H1 (cell line): ENCODE measurements at regions of chr17 and their contacts with region 1.

Region 1: DNA sequence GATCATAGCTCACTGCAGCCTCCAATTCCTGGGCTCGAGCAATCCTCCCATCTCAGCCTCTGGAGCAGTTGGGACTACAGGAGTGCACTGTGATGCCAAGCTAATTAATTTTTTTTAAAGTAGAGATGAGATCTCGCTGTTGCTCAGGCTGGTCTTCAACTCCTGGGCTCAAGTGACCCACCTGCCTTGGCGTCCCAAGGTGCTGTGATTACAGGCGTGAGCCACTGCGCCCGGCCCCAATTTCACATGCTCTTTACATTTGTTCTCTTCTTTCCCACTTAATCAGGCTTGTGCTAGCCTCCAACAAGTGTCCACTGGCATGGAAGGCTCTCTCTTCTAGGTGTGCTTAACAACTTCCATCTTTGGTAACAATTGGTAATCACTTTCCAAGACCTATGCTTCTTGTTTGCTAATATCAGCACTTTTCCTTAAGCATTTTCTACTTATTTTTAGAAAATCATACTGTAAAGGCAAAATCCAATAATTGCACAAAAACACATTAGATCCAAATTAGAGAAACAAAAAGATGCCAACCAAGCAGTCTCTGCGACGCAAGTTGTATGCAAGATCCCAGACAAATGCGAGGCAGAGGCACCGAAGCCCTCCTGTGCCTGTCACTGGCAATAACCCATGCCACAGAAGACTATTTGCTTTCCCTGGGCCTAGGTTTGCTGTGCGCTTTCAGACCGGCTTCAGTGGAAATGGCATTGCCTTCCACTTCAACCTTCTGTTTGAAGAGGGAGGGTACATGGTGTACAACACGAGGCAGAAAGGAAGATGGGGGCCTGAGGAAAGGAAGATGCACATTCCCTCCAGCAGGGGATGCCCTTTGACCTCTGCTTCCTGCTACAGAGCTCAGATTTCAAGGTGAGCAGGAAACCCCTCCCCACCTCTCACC is 52.6 kb downstream of the NOS2 start:
- DNase-seq: peak; percentile 43 to 81
- H3K4me3 ChIP-seq: no peak overlapping the region
- H3K27ac ChIP-seq: no peak overlapping the region
- H3K4me1 ChIP-seq: 0 out of 7 replicates have a peak, but pooled peaks cover 0 to 2% (median 0%) of the 10 kb centered on the region in 4 experiments
- H3K27me3 ChIP-seq: no peaks in the 10 kb centered on the region; a peak in 1 of 7 replicates
- CTCF ChIP-seq: peak; percentile 62 to 90 (median 72)
- EP300 ChIP-seq: peak in 1 of 2 experiments; percentile 49; a peak in 1 of 3 replicates
- POLR2A ChIP-seq: no peak
- RAD21 ChIP-seq: peak; percentile 28 to 32; a peak in 2 of 4 replicates

Region 2: GRCh38 chr17:27666831-27667560 is 80.7 kb before region 1 on chr17:
- CTCF ChIA-PET with region 1: interaction called, 338 read pairs
- POLR2A ChIA-PET with region 1: no interaction called
- DNase-seq: no peak
- H3K4me3 ChIP-seq: no peak overlapping the region
- H3K27ac ChIP-seq: no peak overlapping the region
- H3K4me1 ChIP-seq: no peaks in the 10 kb centered on the region
- H3K27me3 ChIP-seq: no peaks in the 10 kb centered on the region
- CTCF ChIP-seq: no peak
- EP300 ChIP-seq: no peak
- POLR2A ChIP-seq: no peak
- RAD21 ChIP-seq: no peak

Region 3: GRCh38 chr17:27780092-27780827 is 32.5 kb after region 1 on chr17:
- CTCF ChIA-PET with region 1: no interaction called
- POLR2A ChIA-PET with region 1: no interaction called
- DNase-seq: no peak
- H3K4me3 ChIP-seq: no peak overlapping the region
- H3K27ac ChIP-seq: no peak overlapping the region
- H3K4me1 ChIP-seq: peaks cover 0 to 6% (median 4%) of the 10 kb centered on the region in 4 experiments; a peak in 6 of 7 replicates
- H3K27me3 ChIP-seq: no peaks in the 10 kb centered on the region
- CTCF ChIP-seq: no peak
- EP300 ChIP-seq: no peak
- POLR2A ChIP-seq: no peak
- RAD21 ChIP-seq: no peak